ENCODE measurements at regions of chr15 and their contacts with region 1.

Region 1: DNA sequence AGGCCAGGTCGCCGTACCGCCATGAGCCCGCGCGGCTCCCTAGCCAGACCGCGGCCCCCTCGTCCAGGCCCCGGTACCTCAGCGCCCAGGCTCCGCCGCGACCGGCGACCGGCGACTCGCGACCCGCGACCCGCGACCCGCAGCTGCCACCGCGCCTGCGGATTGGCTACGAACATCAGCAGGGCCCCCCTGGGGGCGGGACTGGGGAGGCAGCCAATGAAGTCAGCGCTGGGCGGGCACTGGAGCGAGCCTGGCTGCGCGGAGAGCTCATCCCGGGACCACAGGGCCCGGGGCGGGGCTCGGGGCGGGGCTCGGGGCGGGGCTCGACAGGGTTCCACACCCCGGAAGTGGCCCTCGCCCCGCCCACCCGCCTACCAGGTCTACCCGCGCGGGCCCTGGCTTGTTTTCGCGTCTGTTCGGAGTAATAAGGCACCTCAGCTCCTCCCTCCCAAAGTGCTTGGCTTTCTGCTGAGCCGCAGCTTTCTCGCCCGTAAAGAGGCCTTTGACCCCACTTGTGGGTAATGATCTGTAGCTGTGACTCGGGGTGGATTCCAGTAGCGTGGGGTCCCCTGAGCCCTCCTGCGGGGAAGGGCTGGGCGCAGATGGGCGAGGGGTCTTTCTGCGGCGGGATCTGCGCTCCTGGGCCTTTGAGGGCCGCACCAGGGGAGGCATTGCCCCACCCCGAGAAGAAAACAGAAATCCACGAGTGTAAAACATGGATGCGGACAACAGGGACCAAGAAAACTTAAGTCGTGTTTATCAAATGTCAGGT is at the start of gene LYSMD4:
- DNase-seq: peak; percentile 97 to 99 (median 98)
- ATAC-seq: peak; percentile 98
- H3K4me3 ChIP-seq: peak within 1 kb of the TSS; percentile 80
- H3K4me3 Mint-ChIP-seq: peak within 1 kb of the TSS; percentile 94
- H3K27ac ChIP-seq: peak within 1 kb of the TSS; percentile 81 to 85
- H3K27ac Mint-ChIP-seq: peak within 1 kb of the TSS; percentile 94
- H3K4me1 ChIP-seq: peaks cover 16% of the 10 kb centered on the region
- H3K4me1 Mint-ChIP-seq: peaks cover 28% of the 10 kb centered on the region
- H3K27me3 ChIP-seq: no peaks in the 10 kb centered on the region
- H3K27me3 Mint-ChIP-seq: no peaks in the 10 kb centered on the region
- CTCF ChIP-seq: no peak
- total RNA-seq, gene LYSMD4: 12.9 to 13.0 TPM

Region 2: GRCh38 chr15:99250494-99251435 is 482.7 kb before region 1 on chr15:
- CTCF ChIA-PET with region 1: no interaction called
- POLR2A ChIA-PET with region 1: interaction called, 10 read pairs
- intact Hi-C with region 1: loop called in 1 of 2 experiments (anchors 1 kb)
- DNase-seq: peak; percentile 85 to 98 (median 90)
- ATAC-seq: peak; percentile 98
- H3K4me3 ChIP-seq: peak overlapping the region; percentile 75
- H3K4me3 Mint-ChIP-seq: peak overlapping the region; percentile 86
- H3K27ac ChIP-seq: peak overlapping the region; percentile 32 to 53
- H3K27ac Mint-ChIP-seq: peak overlapping the region; percentile 81
- H3K4me1 ChIP-seq: peaks cover 22% of the 10 kb centered on the region
- H3K4me1 Mint-ChIP-seq: peaks cover 24% of the 10 kb centered on the region
- H3K27me3 ChIP-seq: no peaks in the 10 kb centered on the region
- H3K27me3 Mint-ChIP-seq: no peaks in the 10 kb centered on the region
- CTCF ChIP-seq: no peak

Region 3: DNA sequence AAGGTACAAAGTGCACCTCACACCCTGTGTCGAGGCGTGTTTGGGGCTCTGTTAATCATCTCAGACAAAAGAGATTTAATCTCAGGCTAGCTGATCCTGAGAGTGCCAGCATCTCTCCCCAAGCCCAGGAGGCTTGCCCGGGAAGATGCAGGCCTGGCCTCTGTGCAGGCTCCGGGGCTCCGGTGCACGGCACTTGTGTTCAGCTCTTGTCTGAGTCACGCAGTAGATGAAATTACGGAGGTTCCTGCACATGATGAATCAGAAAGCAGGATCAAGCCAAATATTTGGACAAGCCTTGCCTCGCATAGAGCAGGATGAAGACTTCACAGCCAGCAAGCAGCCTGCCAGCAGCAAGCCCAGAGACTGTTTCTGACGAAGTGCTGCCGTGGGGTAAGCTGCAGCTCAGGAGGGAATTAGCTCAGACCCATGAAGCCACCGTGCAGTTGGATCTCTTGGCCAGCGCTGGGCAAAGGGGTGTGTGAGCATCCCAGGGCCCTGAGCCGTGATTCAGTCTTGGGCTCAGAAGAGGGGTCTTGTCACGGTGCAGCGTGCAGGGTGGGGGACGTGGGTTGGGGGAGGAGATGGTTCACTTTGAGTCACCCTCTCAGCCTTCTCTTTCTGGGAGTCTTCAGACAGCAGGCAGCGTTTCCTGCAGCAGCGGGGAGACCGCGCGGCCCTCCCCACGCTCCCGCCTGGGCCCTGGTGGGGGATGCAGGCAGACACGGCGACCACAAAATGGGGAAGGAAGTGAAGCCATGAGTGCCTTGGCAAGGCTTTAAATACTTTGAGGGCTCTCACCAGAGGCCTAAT is 256.8 kb before region 1 on chr15:
- CTCF ChIA-PET with region 1: no interaction called
- POLR2A ChIA-PET with region 1: no interaction called
- intact Hi-C with region 1: no loop called
- DNase-seq: peak in 9 of 14 experiments; percentile 31 to 67 (median 49)
- ATAC-seq: peak; percentile 67
- H3K4me3 ChIP-seq: no peak overlapping the region
- H3K4me3 Mint-ChIP-seq: peak overlapping the region; percentile 11
- H3K27ac ChIP-seq: no peak overlapping the region
- H3K27ac Mint-ChIP-seq: peak overlapping the region; percentile 9
- H3K4me1 ChIP-seq: peaks cover 20% of the 10 kb centered on the region
- H3K4me1 Mint-ChIP-seq: peaks cover 32% of the 10 kb centered on the region
- H3K27me3 ChIP-seq: no peaks in the 10 kb centered on the region
- H3K27me3 Mint-ChIP-seq: no peaks in the 10 kb centered on the region
- CTCF ChIP-seq: no peak

Region 4: DNA sequence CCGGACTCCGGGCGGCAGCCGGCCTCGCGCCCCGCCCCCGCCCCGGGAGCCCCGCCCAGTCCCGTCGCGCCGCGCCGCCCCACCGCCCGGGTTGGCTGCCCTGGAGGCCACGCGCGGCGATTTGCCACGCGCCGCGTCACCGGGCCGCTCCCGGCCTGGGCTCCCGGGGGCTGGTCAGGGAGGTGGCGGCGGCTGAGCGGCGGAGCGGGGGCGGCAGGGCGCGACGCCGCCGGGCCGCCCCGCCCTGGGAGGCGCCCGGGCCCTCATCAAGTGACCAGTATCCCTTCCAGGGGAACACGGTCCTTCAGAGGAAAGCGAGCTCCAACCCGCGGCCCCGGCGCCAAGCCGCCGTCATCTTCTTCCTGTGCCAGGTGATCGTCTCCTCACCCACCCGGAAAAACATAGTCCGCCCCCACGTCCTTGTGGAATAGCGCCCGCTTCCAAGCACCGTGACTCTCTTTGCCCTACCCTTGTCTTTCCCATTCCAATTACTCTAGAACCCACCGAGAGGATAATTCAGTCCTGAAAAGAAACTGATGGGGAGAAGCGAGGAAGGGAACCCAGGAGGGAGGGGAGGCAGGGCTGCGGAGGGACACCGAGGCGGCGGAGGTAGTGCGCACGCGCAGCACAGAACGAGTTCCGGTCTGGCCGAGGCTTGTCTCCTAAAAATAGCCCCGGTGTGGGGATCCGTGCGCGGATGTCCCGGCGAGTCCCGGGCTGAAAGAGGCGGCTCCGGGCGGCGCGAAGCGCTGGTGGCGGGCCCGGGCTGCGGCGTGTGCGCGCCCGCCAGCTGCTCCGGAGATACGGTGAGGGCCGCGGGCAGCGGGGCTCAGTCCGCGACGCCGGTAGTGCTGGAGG is 167.9 kb before region 1 on chr15 and contains the start of gene MEF2A:
- CTCF ChIA-PET with region 1: no interaction called
- POLR2A ChIA-PET with region 1: interaction called, 17 read pairs
- intact Hi-C with region 1: loop called in 1 of 2 experiments (anchors 2 kb)
- DNase-seq: peak; percentile 84 to 96 (median 88)
- ATAC-seq: peak; percentile 69
- H3K4me3 ChIP-seq: peak within 1 kb of the TSS; percentile 97
- H3K4me3 Mint-ChIP-seq: peak within 1 kb of the TSS; percentile 97
- H3K27ac ChIP-seq: peak within 1 kb of the TSS; percentile 86 to 94
- H3K27ac Mint-ChIP-seq: peak within 1 kb of the TSS; percentile 96
- H3K4me1 ChIP-seq: peaks cover 22% of the 10 kb centered on the region
- H3K4me1 Mint-ChIP-seq: peaks cover 57% of the 10 kb centered on the region
- H3K27me3 ChIP-seq: no peaks in the 10 kb centered on the region
- H3K27me3 Mint-ChIP-seq: no peaks in the 10 kb centered on the region
- CTCF ChIP-seq: no peak
- total RNA-seq, gene MEF2A: 23.2 to 24.9 TPM

Region 5: GRCh38 chr15:99719096-99719541 is 14.3 kb before region 1 on chr15:
- CTCF ChIA-PET with region 1: no interaction called
- POLR2A ChIA-PET with region 1: interaction called, 13 read pairs
- intact Hi-C with region 1: no loop called
- DNase-seq: no peak
- ATAC-seq: no peak
- H3K4me3 ChIP-seq: no peak overlapping the region
- H3K4me3 Mint-ChIP-seq: no peak overlapping the region
- H3K27ac ChIP-seq: no peak overlapping the region
- H3K27ac Mint-ChIP-seq: no peak overlapping the region
- H3K4me1 ChIP-seq: peaks cover 23% of the 10 kb centered on the region
- H3K4me1 Mint-ChIP-seq: peaks cover 38% of the 10 kb centered on the region
- H3K27me3 ChIP-seq: no peaks in the 10 kb centered on the region
- H3K27me3 Mint-ChIP-seq: no peaks in the 10 kb centered on the region
- CTCF ChIP-seq: no peak

Region 6: GRCh38 chr15:99762288-99762687 is 28.8 kb after region 1 on chr15:
- CTCF ChIA-PET with region 1: no interaction called
- POLR2A ChIA-PET with region 1: no interaction called
- intact Hi-C with region 1: no loop called
- DNase-seq: no peak
- ATAC-seq: no peak
- H3K4me3 ChIP-seq: no peak overlapping the region
- H3K4me3 Mint-ChIP-seq: no peak overlapping the region
- H3K27ac ChIP-seq: no peak overlapping the region
- H3K27ac Mint-ChIP-seq: no peak overlapping the region
- H3K4me1 ChIP-seq: no peaks in the 10 kb centered on the region
- H3K4me1 Mint-ChIP-seq: no peaks in the 10 kb centered on the region
- H3K27me3 ChIP-seq: no peaks in the 10 kb centered on the region
- H3K27me3 Mint-ChIP-seq: no peaks in the 10 kb centered on the region
- CTCF ChIP-seq: no peak